ENCODE measurements at regions of chr6 and their contacts with region 1.

Region 1: DNA sequence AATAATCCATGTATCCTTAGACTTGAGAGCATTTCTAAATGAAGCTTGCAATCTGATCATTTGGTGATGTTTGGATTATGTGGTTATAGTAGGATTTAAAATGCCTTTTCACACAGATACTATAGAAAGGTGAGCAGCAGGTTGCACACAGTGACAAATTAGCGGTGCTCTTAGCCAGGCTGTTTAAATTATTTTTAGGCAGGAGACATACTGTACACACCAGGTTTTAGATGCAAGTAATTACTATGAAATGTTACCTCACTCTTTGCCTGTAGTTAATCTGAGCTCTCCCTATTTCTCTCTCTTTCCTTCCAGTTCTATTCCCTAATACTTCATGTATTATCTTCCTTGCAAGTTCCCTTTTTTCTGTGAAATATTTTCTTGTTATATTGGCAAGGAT is 191.7 kb downstream of the RIMS1 start:
- DNase-seq: no peak
- H3K4me3 ChIP-seq: no peak overlapping the region
- H3K27ac ChIP-seq: no peak overlapping the region
- H3K4me1 ChIP-seq: no peaks in the 10 kb centered on the region
- H3K27me3 ChIP-seq: no peaks in the 10 kb centered on the region
- CTCF ChIP-seq: no peak

Region 2: DNA sequence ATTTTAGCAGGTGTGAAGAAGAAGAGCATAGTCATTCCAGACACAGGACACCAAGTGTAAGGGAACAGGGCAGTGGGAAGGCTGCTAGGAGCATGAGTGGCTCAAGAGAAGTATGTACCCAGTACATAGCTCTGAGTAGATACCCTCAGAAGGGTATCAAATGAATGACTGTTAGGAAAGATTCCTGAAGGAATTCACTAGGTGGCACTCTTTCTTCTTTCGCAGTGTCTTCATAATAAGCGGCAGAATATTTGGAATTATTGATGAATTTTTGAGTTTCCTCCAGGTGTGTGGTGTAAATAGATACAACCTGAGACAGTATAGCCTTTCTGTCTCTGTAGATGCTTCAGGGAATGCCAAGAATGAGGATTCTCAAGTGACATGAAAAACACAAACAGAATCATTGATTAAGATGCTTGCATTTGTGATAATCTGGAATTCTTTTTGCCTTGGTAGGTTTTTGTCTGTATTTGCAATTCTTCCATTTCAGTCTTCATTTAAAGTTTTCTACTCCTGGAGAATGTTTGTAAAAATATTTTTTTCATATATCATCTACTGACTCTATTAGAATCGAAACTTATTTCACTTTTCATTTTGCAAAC is 456.1 kb before region 1 on chr6:
- CTCF ChIA-PET with region 1: no interaction called
- POLR2A ChIA-PET with region 1: no interaction called
- intact Hi-C with region 1: loop called (anchors 5 kb)
- DNase-seq: no peak
- H3K4me3 ChIP-seq: no peak overlapping the region
- H3K27ac ChIP-seq: no peak overlapping the region
- H3K4me1 ChIP-seq: no peaks in the 10 kb centered on the region
- H3K27me3 ChIP-seq: no peaks in the 10 kb centered on the region
- CTCF ChIP-seq: peak; percentile 64